Body of pancreas (tissue), 4 donors: ENCODE measurements at regions of chr3 and their contacts with region 1.

Region 1: DNA sequence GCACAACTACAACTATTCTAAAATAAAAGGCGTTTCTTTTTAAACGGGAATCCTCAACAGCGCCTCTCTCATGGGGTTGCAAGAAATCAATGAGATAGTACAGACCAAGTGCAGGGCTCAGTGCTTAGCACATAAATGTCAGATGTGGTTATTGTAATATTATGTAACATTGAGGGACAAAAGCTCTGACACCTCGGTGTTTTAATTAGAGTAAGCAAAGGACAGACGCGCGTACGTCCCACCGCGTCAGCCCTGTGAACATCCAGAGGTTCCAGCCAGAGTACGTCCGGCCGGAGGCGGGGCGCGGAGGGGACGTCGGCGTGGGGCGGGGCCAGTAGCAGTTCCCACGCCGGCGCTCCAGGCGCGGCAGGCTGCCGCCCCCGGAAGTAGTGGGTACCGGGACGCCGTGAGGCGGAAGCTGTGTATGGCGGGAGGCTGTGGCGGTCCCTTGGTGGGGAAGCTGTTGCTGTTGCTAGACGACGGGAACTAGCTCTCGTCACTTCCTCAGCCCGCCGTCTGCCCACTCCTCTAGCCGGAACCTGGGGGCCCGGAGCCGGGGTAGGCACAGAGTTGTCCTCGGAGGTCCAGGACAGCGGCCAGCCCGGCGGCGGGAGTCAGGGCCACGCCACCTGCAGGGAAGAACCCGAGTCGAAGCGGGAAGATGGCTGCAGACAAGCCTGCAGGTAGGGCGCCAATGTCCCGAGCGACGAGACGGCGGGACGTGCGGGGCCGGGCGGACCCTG is at the start of gene CNOT10:
- DNase-seq: peak; percentile 90 to 95 (median 93)
- ATAC-seq: peak; percentile 100
- H3K4me3 ChIP-seq: peak within 1 kb of the TSS; percentile 76 to 81
- H3K27ac ChIP-seq: peak within 1 kb of the TSS; percentile 44 to 84 (median 76)
- H3K4me1 ChIP-seq: peaks cover 21% of the 10 kb centered on the region
- H3K27me3 ChIP-seq: no peaks in the 10 kb centered on the region
- CTCF ChIP-seq: peak in 4 of 7 experiments; percentile 22 to 48 (median 30)
- POLR2A ChIP-seq: peak in 2 of 3 donors; percentile 63 to 71
- total RNA-seq, gene CNOT10: 10.4 to 22.1 TPM

Region 2: DNA sequence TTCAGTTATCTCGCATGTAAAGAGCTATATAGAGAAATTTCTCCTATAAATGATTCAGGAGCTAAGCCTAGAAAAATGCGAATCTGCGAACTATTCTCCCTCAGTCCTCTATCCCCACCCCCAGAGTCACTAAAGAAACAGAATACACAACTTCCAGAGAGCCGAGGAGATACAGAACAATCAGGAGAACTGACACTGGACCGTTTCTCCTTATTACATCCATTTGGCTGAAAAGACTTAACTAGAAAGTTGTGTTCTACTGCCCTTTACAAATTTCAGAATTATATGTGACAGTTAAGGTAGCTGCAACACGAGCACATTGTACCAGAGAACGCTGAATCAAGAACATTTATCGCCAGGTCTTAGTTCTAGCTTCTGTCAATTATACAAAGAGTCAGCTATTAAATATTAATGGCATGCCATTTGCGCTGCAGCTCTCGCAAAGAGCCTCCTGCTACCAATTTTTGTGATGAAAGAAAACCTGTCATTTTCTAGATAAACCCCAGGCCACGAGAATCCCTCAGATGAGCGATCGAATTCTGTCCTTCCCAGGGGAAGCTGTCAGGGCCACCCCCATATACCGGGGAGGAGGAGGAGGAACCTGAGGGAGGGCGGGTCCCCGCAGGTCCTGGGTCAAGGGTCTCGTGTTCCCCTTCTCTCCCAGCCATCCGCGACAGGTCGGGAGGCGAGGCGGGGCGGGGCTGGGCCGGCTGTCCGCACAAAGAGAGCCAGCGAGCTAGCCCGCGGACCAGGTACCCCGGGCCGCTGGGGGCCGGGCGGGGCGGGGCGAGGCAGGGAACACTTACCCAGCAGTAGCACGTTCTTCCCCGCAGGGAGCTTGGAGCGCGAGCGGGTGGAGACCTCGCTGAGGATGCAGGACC is 115.2 kb before region 1 on chr3:
- intact Hi-C with region 1: loop called (anchors 10 kb)
- DNase-seq: peak; percentile 64 to 76 (median 64)
- ATAC-seq: peak; percentile 62
- H3K4me3 ChIP-seq: peak overlapping the region; percentile 53 to 86
- H3K27ac ChIP-seq: peak overlapping the region; percentile 76 to 98 (median 94)
- H3K4me1 ChIP-seq: peaks cover 23% of the 10 kb centered on the region
- H3K27me3 ChIP-seq: no peaks in the 10 kb centered on the region
- CTCF ChIP-seq: no peak
- POLR2A ChIP-seq: no peak

Region 3: GRCh38 chr3:32934150-32934742 is 249.3 kb after region 1 on chr3:
- intact Hi-C with region 1: no loop called
- DNase-seq: peak in 3 of 4 donors; percentile 14 to 35 (median 16)
- ATAC-seq: no peak
- H3K4me3 ChIP-seq: no peak overlapping the region
- H3K27ac ChIP-seq: no peak overlapping the region
- H3K4me1 ChIP-seq: no peaks in the 10 kb centered on the region
- H3K27me3 ChIP-seq: no peaks in the 10 kb centered on the region
- CTCF ChIP-seq: peak; percentile 46 to 58 (median 49)
- POLR2A ChIP-seq: no peak